Right cardiac atrium (tissue), 5 donors: ENCODE measurements at regions of chr22 and their contacts with region 1.

Region 1: DNA sequence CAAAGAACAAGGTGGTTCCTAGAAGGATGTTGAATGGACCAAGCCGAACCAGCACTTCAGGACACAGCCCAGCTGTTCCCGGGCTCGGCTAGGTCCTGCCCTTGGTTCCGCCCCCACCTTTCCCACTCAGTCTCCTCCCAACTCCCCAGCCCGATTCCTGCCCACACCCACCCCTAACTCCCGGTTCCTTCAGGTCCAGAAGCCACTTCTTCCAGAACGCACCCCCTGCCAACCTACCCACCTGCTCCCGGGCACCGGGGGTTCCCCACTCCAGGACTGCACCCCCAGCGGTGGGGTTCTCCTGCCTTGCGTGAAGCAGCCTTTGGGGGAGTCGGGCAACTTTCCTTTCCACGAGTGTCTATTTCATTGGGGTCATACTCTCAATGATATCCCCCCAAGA is 30.7 kb downstream of the CERK start:
- DNase-seq: peak in 1 of 3 donors; percentile 39
- ATAC-seq: no peak
- H3K4me3 ChIP-seq: no peak overlapping the region
- H3K27ac ChIP-seq: no peak overlapping the region
- H3K4me1 ChIP-seq: no peaks in the 10 kb centered on the region
- H3K27me3 ChIP-seq: no peaks in the 10 kb centered on the region

Region 2: GRCh38 chr22:46528121-46528610 is 179.1 kb before region 1 on chr22:
- intact Hi-C with region 1: no loop called
- DNase-seq: peak in 1 of 3 donors; percentile 10
- ATAC-seq: peak in 1 of 2 donors; percentile 14
- H3K4me3 ChIP-seq: no peak overlapping the region
- H3K27ac ChIP-seq: no peak overlapping the region
- H3K4me1 ChIP-seq: no peaks in the 10 kb centered on the region
- H3K27me3 ChIP-seq: no peaks in the 10 kb centered on the region

Region 3: DNA sequence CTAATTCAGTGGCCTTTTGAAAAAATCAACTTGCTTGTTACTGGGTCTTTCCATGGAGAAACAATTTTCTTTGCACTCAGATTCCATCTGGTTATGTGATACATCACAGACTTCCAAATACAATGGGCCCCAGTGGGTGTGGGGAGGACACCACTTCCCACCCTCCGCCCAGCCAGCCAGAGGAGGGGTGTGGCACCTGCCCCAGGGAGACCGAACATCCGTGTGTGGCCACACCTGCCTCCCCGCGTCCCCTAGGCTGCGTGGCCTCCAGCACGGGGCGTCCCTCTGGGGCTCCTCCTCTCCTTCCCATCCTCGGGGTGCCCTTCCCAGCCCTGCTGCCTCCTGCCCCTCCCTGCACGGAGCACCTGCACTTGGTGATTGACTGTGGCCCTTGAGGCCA is 18.4 kb before region 1 on chr22:
- intact Hi-C with region 1: loop called in 1 of 4 experiments (anchors 2 kb)
- DNase-seq: peak; percentile 57 to 82 (median 66)
- ATAC-seq: peak; percentile 16 to 64
- H3K4me3 ChIP-seq: no peak overlapping the region
- H3K27ac ChIP-seq: no peak overlapping the region
- H3K4me1 ChIP-seq: peaks cover 7% of the 10 kb centered on the region
- H3K27me3 ChIP-seq: no peaks in the 10 kb centered on the region

Region 4: GRCh38 chr22:46798366-46799350 is 91.4 kb after region 1 on chr22:
- intact Hi-C with region 1: no loop called
- DNase-seq: peak; percentile 72 to 91 (median 89)
- ATAC-seq: peak; percentile 76 to 81
- H3K4me3 ChIP-seq: no peak overlapping the region
- H3K27ac ChIP-seq: no peak overlapping the region
- H3K4me1 ChIP-seq: no peaks in the 10 kb centered on the region
- H3K27me3 ChIP-seq: no peaks in the 10 kb centered on the region